ENCODE measurements at regions of chrX and their contacts with region 1.

Region 1: DNA sequence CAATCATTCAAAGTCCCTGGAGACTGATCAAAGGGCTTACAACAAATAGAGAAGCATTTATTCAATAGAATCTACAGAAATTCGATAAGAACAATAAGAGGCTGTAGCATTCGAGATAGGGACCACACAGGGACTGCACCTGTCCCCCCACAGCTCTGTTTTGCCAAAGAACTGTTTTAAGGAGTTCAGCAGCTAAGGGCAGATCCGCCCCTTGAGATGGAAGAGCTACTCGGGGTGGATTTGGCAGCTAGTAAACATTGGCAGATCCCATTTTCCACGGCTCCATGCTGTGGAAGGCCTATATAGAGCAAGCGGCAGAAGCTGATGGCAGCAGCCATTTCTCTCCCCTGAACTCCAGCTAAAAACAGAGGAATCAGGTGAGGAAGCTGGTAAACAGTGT is 75.7 kb downstream of the GPR82 start:
- DNase-seq: no peak
- H3K4me3 ChIP-seq: no peak overlapping the region
- H3K27ac ChIP-seq: no peak overlapping the region
- H3K4me1 ChIP-seq: no peaks in the 10 kb centered on the region
- H3K27me3 ChIP-seq: no peaks in the 10 kb centered on the region; the same call in 1 of the 2 replicates
- CTCF ChIP-seq: no peak
- EP300 ChIP-seq: no peak
- RAD21 ChIP-seq: no peak

Region 2: GRCh38 chrX:41664307-41665299 is 135.1 kb before region 1 on chrX:
- CTCF ChIA-PET with region 1: no interaction called
- POLR2A ChIA-PET with region 1: no interaction called
- DNase-seq: no peak
- H3K4me3 ChIP-seq: no peak overlapping the region
- H3K27ac ChIP-seq: peak overlapping the region in 1 of 2 experiments; percentile 13; a peak in 1 of 4 replicates
- H3K4me1 ChIP-seq: no peaks in the 10 kb centered on the region
- H3K27me3 ChIP-seq: no peaks in the 10 kb centered on the region
- CTCF ChIP-seq: no peak
- EP300 ChIP-seq: no peak
- RAD21 ChIP-seq: no peak

Region 3: DNA sequence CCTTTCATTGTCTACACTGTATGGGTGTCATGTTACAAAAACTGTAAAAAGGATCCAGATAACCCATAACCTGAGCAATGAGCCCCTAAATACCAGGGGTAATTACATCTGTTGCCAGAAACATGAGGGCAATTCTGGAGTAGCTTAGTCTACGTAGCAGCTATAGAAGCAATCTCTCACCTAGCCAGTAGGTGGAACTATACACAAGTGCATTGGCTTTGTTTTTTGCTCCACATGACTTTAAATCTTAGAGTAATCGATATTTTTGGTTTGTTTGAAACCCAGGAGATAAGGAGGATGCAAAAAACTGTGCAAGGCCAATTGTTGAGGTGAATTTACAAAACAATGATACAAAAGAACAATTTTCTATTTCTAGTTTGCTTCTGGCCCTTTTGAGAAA is 18.2 kb before region 1 on chrX:
- CTCF ChIA-PET with region 1: interaction called, 22 read pairs
- POLR2A ChIA-PET with region 1: no interaction called
- DNase-seq: peak; percentile 36
- H3K4me3 ChIP-seq: no peak overlapping the region
- H3K27ac ChIP-seq: no peak overlapping the region
- H3K4me1 ChIP-seq: peaks cover 2 to 6% of the 10 kb centered on the region in 2 experiments; a peak in 3 of 4 replicates
- H3K27me3 ChIP-seq: no peaks in the 10 kb centered on the region
- CTCF ChIP-seq: peak; percentile 80
- EP300 ChIP-seq: no peak
- RAD21 ChIP-seq: peak; percentile 77

Measured in SK-N-SH (cell line).